MCF 10A (cell line): ENCODE measurements at regions of chr12 and their contacts with region 1.

Region 1: GRCh38 chr12:53352331-53353256 is 16.4 kb upstream of the SP7 start:
- DNase-seq: peak; percentile 91
- H3K4me3 Mint-ChIP-seq: no peak overlapping the region
- H3K27ac Mint-ChIP-seq: peak overlapping the region; percentile 4
- H3K4me1 Mint-ChIP-seq: peaks cover 15% of the 10 kb centered on the region
- H3K27me3 Mint-ChIP-seq: no peaks in the 10 kb centered on the region
- CTCF ChIP-seq: peak; percentile 76

Region 2: DNA sequence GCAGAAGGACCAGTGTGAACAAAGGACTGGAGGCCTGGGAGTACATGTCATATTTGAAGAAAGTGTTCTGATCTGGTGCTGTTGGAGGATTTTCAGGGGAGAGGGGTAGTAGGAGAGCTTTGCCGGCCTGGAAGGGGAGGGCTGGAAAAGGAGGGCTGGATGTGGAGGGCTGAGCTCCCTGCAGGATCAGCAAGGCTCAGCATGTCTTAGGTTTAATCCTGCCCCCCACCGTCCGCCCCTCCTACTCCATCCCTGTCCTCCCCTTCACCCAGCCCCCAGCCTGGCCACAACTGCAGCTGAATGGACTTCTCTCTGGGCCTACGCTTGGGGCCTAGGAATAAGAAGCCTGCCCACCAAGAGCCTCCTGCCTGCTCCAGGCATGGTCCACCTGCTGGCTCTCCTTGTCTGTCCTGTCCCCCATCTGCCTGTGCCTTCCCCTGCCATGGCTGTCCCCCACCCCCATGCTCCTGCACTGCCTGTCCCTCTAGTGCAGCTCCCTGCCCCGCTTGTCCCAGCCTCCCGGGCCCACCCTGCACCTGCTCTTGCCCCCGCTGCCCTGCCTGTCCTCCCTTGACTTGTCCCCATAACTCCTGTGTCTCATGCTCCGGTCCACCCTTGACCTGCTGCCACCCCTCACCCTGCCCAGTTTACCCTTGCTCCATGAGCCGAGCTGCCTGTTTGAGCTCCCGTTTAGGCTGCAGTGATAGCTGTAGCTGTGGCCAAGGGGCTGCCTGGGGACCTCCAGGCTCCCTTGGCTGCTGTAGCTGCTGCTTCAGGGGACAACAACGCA is 110.8 kb before region 1 on chr12:
- CTCF ChIA-PET with region 1: no interaction called
- POLR2A ChIA-PET with region 1: no interaction called
- intact Hi-C with region 1: no loop called
- DNase-seq: no peak
- H3K4me3 Mint-ChIP-seq: no peak overlapping the region
- H3K27ac Mint-ChIP-seq: no peak overlapping the region
- H3K4me1 Mint-ChIP-seq: peaks cover under 1% of the 10 kb centered on the region
- H3K27me3 Mint-ChIP-seq: peaks cover 35% of the 10 kb centered on the region
- CTCF ChIP-seq: no peak

Region 3: GRCh38 chr12:53365245-53365904 is 12.8 kb after region 1 on chr12:
- CTCF ChIA-PET with region 1: interaction called, 22 read pairs
- POLR2A ChIA-PET with region 1: interaction called, 8 read pairs
- intact Hi-C with region 1: no loop called
- DNase-seq: peak; percentile 43
- H3K4me3 Mint-ChIP-seq: no peak overlapping the region
- H3K27ac Mint-ChIP-seq: no peak overlapping the region
- H3K4me1 Mint-ChIP-seq: peaks cover 14% of the 10 kb centered on the region
- H3K27me3 Mint-ChIP-seq: no peaks in the 10 kb centered on the region
- CTCF ChIP-seq: no peak

Region 4: DNA sequence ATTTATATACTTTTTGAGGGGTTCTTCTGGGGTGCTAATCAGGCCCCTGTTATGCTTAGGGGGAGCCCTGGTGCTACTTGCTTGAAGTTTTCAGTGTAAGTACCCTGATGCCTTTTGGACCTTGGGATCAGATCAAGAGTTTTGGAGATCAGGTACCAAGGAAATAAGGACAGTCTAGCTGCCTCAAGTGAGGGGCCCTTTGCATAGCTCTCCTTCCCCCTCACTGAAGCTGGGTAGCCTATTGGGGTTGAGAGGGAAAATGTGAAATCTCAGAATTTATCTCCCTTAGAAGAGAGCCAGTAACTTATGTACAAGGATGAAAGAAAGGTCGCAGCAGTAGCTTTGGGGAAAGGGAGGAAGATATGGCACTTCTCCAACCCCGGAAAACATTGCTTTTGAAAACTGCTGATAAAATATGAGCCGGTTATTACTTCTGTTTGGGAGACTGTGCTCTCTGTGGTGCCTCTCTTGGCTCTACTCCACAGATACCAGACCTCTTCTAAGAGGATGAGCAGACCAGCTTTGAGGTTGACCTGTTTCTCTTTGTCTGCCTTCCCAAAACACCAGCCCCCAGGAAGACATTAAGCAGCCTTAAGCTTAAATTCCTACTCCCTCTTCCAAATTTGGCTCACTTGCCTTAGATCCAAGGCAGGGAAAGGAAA is 62.3 kb after region 1 on chr12:
- CTCF ChIA-PET with region 1: interaction called, 160 read pairs
- POLR2A ChIA-PET with region 1: interaction called, 6 read pairs
- intact Hi-C with region 1: loop called (anchors 2 kb)
- DNase-seq: no peak
- H3K4me3 Mint-ChIP-seq: no peak overlapping the region
- H3K27ac Mint-ChIP-seq: no peak overlapping the region
- H3K4me1 Mint-ChIP-seq: peaks cover 8% of the 10 kb centered on the region
- H3K27me3 Mint-ChIP-seq: no peaks in the 10 kb centered on the region
- CTCF ChIP-seq: no peak

Region 5: DNA sequence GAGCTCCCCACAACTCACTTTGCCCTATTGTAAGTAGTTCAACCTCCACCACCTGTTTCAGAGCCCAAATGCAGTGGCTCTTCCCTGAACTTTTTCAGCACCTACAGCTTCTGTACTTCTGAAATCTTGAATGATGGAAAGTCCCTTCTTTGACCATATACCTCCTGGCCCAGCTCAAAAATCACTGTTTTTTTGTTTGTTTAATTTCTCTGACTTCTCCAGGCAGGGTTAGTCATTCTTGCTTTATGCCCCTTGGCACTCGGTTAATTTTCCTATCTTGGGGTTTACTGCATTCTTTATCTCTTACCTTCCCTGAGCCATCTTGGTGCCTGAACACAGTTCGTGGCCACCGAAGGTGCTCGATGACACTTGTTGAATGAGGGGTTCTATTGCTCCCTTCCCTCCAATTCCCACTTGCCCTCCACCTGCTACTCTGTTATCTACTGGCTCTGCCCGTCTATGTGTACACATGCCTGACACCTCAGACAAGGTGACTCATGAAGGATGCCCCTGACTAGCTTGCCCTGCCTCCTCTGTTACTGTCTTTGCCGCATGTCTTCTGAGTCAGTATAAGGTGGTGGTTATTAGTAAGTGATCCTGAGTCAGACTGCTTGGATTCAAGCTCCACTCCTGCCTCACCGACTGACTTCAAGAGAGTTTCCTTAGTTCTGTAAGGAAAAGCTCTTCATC is 75.5 kb after region 1 on chr12:
- CTCF ChIA-PET with region 1: interaction called, 160 read pairs
- POLR2A ChIA-PET with region 1: interaction called, 20 read pairs
- intact Hi-C with region 1: no loop called
- DNase-seq: peak; percentile 95
- H3K4me3 Mint-ChIP-seq: no peak overlapping the region
- H3K27ac Mint-ChIP-seq: peak overlapping the region; percentile 0
- H3K4me1 Mint-ChIP-seq: peaks cover 21% of the 10 kb centered on the region
- H3K27me3 Mint-ChIP-seq: no peaks in the 10 kb centered on the region
- CTCF ChIP-seq: no peak

Region 6: GRCh38 chr12:53451661-53452158 is 99.1 kb after region 1 on chr12 and contains the start of gene PCBP2:
- CTCF ChIA-PET with region 1: interaction called, 6 read pairs
- POLR2A ChIA-PET with region 1: interaction called, 10 read pairs
- intact Hi-C with region 1: no loop called
- DNase-seq: peak; percentile 99
- H3K4me3 Mint-ChIP-seq: peak within 1 kb of the TSS; percentile 92
- H3K27ac Mint-ChIP-seq: peak within 1 kb of the TSS; percentile 100
- H3K4me1 Mint-ChIP-seq: peaks cover 30% of the 10 kb centered on the region
- H3K27me3 Mint-ChIP-seq: no peaks in the 10 kb centered on the region
- CTCF ChIP-seq: peak; percentile 56
- total RNA-seq, gene PCBP2: 994 and 1,037 TPM in 2 replicates

Region 7: DNA sequence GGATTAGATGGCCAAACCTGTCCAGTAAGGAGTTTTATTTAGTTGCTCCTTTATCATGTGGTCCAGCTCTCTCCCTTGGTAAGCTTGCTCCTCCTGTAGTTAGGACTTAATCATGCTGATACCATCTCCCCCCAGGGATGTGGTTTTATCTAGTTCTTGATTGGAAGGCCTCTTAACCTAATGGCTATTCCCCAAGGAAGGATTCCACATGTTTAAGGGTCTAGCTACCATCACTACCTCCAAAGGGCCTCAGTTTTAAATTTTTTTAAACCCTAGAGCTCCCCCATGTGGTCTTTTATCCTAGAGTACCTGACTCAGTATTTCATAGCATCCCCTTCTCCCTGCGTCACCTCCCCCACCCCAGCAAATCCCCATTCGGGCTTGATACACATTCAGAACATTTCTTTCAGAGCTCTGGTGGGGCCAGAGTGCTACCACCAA is 124.2 kb after region 1 on chr12:
- CTCF ChIA-PET with region 1: interaction called, 13 read pairs
- POLR2A ChIA-PET with region 1: interaction called, 5 read pairs
- intact Hi-C with region 1: no loop called
- DNase-seq: no peak
- H3K4me3 Mint-ChIP-seq: no peak overlapping the region
- H3K27ac Mint-ChIP-seq: no peak overlapping the region
- H3K4me1 Mint-ChIP-seq: peaks cover 18% of the 10 kb centered on the region
- H3K27me3 Mint-ChIP-seq: no peaks in the 10 kb centered on the region
- CTCF ChIP-seq: peak; percentile 21

Region 8: DNA sequence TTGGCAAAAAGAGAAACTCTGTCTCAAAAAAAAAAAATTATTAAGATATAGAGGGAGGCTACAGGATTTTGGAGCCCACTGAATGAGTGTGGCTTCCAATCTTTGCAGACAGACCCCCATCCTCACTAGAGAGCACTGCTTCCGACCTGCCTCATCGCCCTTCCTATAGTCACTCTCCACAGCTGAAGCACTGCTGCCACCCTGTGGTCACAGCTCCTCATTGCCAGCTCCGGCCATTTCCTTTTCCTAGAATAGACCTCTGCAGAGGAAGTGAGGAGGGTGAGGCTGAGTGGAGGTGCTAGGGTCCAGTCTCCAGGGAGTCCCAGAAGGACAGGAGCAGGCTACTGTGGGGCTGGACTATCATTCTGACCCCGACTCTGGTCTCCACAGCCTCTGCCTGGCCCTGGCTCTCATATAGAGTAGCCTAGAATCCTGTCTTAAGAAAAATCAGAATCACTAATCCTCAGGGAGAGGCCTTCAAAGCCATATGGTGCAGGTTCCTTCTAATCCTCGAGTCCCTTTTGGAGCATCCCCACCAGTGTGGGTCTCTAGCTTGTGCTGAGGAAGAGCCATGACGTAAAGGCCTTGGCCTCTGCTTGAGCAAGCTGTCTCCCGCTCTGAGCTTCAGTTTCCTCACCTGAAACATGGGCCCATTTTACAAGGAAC is 156.1 kb after region 1 on chr12:
- CTCF ChIA-PET with region 1: interaction called, 6 read pairs
- POLR2A ChIA-PET with region 1: interaction called, 3 read pairs
- intact Hi-C with region 1: loop called (anchors 1 kb)
- DNase-seq: peak; percentile 85
- H3K4me3 Mint-ChIP-seq: no peak overlapping the region
- H3K27ac Mint-ChIP-seq: no peak overlapping the region
- H3K4me1 Mint-ChIP-seq: peaks cover 5% of the 10 kb centered on the region
- H3K27me3 Mint-ChIP-seq: no peaks in the 10 kb centered on the region
- CTCF ChIP-seq: peak; percentile 88

Region 9: GRCh38 chr12:53551889-53552291 is 199.3 kb after region 1 on chr12:
- CTCF ChIA-PET with region 1: no interaction called
- POLR2A ChIA-PET with region 1: no interaction called
- intact Hi-C with region 1: no loop called
- DNase-seq: no peak
- H3K4me3 Mint-ChIP-seq: no peak overlapping the region
- H3K27ac Mint-ChIP-seq: no peak overlapping the region
- H3K4me1 Mint-ChIP-seq: peaks cover 8% of the 10 kb centered on the region
- H3K27me3 Mint-ChIP-seq: no peaks in the 10 kb centered on the region
- CTCF ChIP-seq: no peak